MCF 10A (cell line): ENCODE measurements at regions of chr6 and their contacts with region 1.

Region 1: DNA sequence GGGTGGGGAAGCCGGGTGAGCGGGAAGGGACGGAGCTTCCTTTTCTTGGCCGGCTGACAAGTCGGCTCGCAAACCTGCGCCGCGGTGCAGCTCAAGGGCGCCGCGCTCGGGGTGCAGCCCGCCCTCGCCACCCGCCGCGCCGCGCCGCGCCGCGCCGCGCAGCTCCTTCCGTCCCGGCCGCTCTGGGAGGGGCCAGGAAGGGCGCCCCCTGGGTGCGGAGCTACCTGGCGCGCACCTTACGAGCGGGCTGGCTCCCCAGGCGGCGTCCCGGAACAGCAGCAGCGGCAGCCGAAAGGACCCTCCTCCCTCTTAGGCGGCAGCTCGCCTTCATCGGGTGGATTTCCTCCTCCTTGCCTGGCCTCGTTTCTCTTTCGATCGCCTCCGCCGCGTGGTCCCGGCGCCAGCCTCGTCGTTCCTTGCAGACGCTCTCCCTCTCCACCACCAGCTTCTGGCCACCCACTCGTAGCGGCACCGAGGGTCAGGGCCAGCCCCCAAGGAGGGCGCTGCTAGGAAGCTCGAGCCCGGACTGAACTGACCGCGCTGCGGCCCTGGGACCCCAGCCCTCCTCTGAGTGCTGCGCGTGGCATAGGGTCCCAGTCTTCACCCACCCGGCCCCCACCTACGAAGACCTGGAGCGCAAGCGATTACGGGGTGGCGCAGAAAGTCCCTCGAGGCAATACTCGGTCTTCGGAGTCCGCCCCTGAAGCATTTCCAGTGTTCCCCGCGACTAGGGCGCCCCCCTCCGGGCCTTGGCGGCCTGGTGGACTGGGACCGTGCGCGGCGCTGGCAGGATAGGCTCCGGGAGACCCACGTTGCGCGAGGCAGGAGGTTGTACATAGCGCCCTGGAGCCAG is at the start of gene MAP3K5:
- DNase-seq: peak; percentile 93
- H3K4me3 Mint-ChIP-seq: peak within 1 kb of the TSS; percentile 92
- H3K27ac Mint-ChIP-seq: peak within 1 kb of the TSS; percentile 98
- H3K4me1 Mint-ChIP-seq: peaks cover 17% of the 10 kb centered on the region
- H3K27me3 Mint-ChIP-seq: no peaks in the 10 kb centered on the region
- CTCF ChIP-seq: peak; percentile 65
- total RNA-seq, gene MAP3K5: 7.6 and 8.4 TPM in 2 replicates

Region 2: DNA sequence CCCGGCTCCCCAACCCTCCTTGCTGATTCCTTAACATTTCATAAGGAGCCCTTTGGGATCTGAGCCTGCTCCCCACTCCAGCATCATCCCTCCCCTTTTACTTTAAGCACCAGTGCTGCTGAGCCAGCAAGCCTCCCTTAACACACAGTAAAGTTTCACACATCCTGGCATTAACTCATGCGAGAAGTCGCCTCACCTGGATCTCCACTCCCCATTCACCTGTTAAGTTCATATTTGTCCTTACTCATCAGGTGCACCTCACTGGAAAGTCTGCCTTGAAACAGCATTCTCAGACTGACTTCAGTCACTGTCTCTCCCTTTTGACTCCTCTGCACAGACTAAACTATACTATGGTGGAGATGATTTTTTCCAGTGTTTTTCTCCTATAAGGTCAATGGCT is 194.6 kb before region 1 on chr6:
- CTCF ChIA-PET with region 1: interaction called, 12 read pairs
- POLR2A ChIA-PET with region 1: interaction called, 3 read pairs
- intact Hi-C with region 1: no loop called
- DNase-seq: no peak
- H3K4me3 Mint-ChIP-seq: no peak overlapping the region
- H3K27ac Mint-ChIP-seq: peak overlapping the region; percentile 54
- H3K4me1 Mint-ChIP-seq: peaks cover 18% of the 10 kb centered on the region
- H3K27me3 Mint-ChIP-seq: no peaks in the 10 kb centered on the region
- CTCF ChIP-seq: no peak

Region 3: DNA sequence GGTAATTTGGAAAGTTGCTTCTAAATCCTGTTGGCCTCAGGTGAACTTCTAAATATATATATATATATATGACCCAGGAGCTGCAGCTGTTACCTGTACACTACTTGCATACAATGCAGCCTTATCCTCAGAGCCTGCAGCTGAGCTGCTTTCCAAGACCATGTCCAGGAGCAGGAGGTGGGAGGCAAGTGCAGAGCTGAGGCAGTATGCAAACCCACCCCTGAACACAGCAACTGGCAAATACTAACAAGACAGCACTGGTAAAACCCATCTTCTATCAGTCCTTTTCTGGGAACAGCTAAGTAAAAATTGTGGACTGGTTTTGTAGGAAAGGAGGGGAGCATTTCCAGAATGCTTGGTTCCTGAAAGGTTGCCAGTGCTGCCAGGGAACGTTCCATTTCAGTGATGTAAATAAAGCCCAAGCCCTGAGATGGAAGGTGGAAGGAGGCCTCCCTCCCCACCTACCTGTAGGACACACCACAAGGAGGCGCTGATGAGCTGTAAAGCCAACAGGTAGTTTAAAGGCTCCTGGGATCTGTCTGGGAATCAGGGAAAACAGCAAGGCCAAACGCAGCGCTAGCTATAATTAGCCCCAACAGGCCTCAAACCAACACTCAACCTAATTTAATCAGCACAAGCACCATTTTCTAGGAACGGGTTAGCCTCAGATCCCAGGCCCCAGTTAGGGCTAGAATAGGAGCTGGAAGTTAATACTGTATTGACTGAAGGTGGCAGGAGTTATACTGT is 148.6 kb before region 1 on chr6:
- CTCF ChIA-PET with region 1: interaction called, 309 read pairs
- POLR2A ChIA-PET with region 1: interaction called, 204 read pairs
- intact Hi-C with region 1: loop called (anchors 1 kb)
- DNase-seq: peak; percentile 94
- H3K4me3 Mint-ChIP-seq: no peak overlapping the region
- H3K27ac Mint-ChIP-seq: peak overlapping the region; percentile 16
- H3K4me1 Mint-ChIP-seq: peaks cover 6% of the 10 kb centered on the region
- H3K27me3 Mint-ChIP-seq: no peaks in the 10 kb centered on the region
- CTCF ChIP-seq: peak; percentile 73

Region 4: GRCh38 chr6:136677831-136678230 is 114.8 kb before region 1 on chr6:
- CTCF ChIA-PET with region 1: interaction called, 8 read pairs
- POLR2A ChIA-PET with region 1: interaction called, 28 read pairs
- intact Hi-C with region 1: no loop called
- DNase-seq: no peak
- H3K4me3 Mint-ChIP-seq: no peak overlapping the region
- H3K27ac Mint-ChIP-seq: no peak overlapping the region
- H3K4me1 Mint-ChIP-seq: no peaks in the 10 kb centered on the region
- H3K27me3 Mint-ChIP-seq: no peaks in the 10 kb centered on the region
- CTCF ChIP-seq: no peak

Region 5: GRCh38 chr6:136761227-136761922 is 31.3 kb before region 1 on chr6:
- CTCF ChIA-PET with region 1: interaction called, 6 read pairs
- POLR2A ChIA-PET with region 1: interaction called, 10 read pairs
- intact Hi-C with region 1: no loop called
- DNase-seq: no peak
- H3K4me3 Mint-ChIP-seq: peak overlapping the region; percentile 17
- H3K27ac Mint-ChIP-seq: peak overlapping the region; percentile 32
- H3K4me1 Mint-ChIP-seq: peaks cover 19% of the 10 kb centered on the region
- H3K27me3 Mint-ChIP-seq: no peaks in the 10 kb centered on the region
- CTCF ChIP-seq: no peak

Region 6: DNA sequence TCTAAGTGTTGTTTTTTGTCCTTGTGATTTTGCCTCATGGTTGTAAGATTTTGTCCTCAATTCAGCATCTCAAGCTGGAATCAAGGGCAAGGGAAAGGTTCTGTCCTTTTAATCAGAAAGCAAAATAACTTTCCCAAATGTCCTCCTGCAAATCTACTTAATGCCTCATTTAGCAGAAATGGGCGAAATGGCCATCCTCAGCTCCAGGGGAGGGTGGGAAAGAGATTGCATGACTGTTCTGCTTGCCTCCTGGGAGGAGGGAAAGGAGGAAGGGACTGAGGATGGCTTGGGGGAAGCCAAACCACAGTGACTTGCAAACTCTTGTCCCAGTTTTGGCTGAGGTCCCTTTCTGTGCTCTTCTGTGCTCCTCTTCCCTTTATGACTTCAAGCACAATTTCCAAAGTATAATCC is 1117.8 kb after region 1 on chr6:
- CTCF ChIA-PET with region 1: no interaction called
- POLR2A ChIA-PET with region 1: no interaction called
- intact Hi-C with region 1: no loop called
- DNase-seq: no peak
- H3K4me3 Mint-ChIP-seq: no peak overlapping the region
- H3K27ac Mint-ChIP-seq: no peak overlapping the region
- H3K4me1 Mint-ChIP-seq: no peaks in the 10 kb centered on the region
- H3K27me3 Mint-ChIP-seq: peaks cover 15% of the 10 kb centered on the region
- CTCF ChIP-seq: no peak